ENCODE measurements at regions of chr14 and their contacts with region 1.

Region 1: DNA sequence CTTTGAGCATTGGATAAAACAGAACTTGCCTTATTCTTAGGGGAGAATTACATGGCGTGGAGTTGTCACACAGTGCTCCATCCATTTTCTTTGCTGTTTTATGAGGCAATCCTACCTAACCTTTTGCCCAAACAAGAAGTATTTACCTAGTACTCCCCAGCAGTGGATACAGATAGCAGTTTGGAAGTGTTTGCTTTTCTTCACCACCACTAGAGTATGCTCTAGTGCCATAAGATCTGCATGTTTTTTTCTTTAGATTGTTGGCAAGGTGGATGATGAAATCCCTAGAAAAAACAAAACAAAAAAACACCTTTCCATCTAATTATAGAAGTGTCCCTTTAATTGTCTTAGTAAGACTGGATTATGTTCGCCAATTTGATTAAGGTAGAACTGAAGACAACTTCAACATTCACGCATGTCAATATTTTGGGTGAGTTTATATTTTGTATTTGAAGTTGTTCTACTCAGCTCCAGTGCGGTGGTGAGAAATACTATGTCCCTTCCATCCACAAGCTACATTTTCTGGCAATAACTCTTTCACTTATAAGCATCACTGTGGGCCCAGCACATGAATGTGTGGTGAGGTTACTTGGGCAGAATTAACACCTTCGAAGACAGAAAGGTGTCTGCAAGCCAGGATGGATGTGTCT is 23.6 kb upstream of the TMEM260 start:
- DNase-seq: peak; percentile 43
- ATAC-seq: peak; percentile 61
- H3K4me3 ChIP-seq: no peak overlapping the region
- H3K27ac ChIP-seq: no peak overlapping the region
- H3K4me1 ChIP-seq: no peaks in the 10 kb centered on the region
- H3K27me3 ChIP-seq: peaks cover 26% of the 10 kb centered on the region
- CTCF ChIP-seq: peak; percentile 52
- POLR2A ChIP-seq: no peak
- RAD21 ChIP-seq: peak; percentile 48

Region 2: GRCh38 chr14:57066887-57067513 is 511.0 kb after region 1 on chr14:
- CTCF ChIA-PET with region 1: no interaction called
- POLR2A ChIA-PET with region 1: no interaction called
- dilution Hi-C with region 1: no loop called
- in situ Hi-C with region 1: no loop called
- intact Hi-C with region 1: loop called (anchors 10 kb)
- DNase-seq: peak; percentile 2
- ATAC-seq: peak; percentile 60
- H3K4me3 ChIP-seq: no peak overlapping the region
- H3K27ac ChIP-seq: no peak overlapping the region
- H3K4me1 ChIP-seq: no peaks in the 10 kb centered on the region
- H3K27me3 ChIP-seq: peaks cover 1% of the 10 kb centered on the region; the same call in 1 of the 2 replicates
- CTCF ChIP-seq: peak; percentile 44
- POLR2A ChIP-seq: no peak
- RAD21 ChIP-seq: peak; percentile 51

Region 3: GRCh38 chr14:57317316-57317715 is 761.3 kb after region 1 on chr14:
- CTCF ChIA-PET with region 1: no interaction called
- POLR2A ChIA-PET with region 1: no interaction called
- dilution Hi-C with region 1: no loop called
- in situ Hi-C with region 1: no loop called
- intact Hi-C with region 1: loop called (anchors 1 kb)
- DNase-seq: peak; percentile 78
- ATAC-seq: peak; percentile 85
- H3K4me3 ChIP-seq: no peak overlapping the region
- H3K27ac ChIP-seq: no peak overlapping the region
- H3K4me1 ChIP-seq: no peaks in the 10 kb centered on the region
- H3K27me3 ChIP-seq: peaks cover 7% of the 10 kb centered on the region
- CTCF ChIP-seq: peak; percentile 93
- POLR2A ChIP-seq: no peak
- RAD21 ChIP-seq: peak; percentile 85